Ascending aorta (tissue), 2 donors: ENCODE measurements at regions of chr3 and their contacts with region 1.

Region 1: DNA sequence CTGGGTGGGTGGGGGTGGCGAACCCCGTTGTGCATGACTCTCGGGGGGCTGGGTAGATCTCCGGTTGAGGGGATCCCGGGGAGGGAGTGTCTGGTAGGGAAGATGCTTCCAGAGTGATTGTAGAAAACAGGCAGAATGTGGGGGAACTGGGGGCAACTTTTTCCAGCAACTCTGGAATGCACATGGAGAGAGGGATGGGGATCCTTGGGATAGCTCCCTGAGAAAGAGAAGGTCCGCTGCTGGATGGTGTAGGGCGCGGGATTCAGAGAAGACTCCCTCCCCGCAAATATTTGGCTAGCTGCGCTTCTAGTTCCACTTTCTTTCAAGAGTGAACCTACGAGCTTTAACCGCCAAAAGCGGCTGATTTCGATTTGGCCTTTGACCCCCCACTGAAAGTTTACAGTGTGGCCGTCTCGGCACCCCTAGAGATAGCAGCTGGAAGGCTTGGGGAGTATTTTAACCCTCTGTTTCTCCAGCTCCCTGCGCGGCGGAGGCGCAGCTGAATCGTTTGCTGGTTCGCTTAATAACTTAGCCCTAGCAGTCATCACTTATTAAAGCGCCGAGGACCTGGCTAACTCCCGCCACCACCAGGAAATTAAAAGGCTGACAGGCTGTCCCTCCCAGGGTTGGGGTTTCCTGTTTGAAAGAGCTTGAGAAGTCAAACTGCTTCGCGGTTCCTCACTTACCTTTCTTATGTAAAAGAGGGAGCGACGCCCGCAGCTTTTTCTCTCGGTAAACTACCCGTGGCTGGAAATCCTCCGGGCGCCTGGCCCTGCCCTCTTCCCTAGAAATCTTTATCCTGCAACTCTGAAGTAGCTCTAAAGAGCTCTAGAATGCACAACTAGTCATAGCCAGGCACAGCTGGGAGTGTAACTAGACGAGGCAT is 1.2 kb downstream of the PHLDB2 start:
- DNase-seq: peak; percentile 45 to 92
- H3K4me3 ChIP-seq: peak overlapping the region; percentile 89 to 93
- H3K27ac ChIP-seq: peak overlapping the region; percentile 97
- H3K4me1 ChIP-seq: peaks cover 3 to 20% of the 10 kb centered on the region in 2 donors
- H3K27me3 ChIP-seq: no peaks in the 10 kb centered on the region
- CTCF ChIP-seq: peak; percentile 49 to 73 (median 66)

Region 2: GRCh38 chr3:111351334-111351733 is 508.9 kb before region 1 on chr3:
- intact Hi-C with region 1: no loop called
- DNase-seq: no peak
- H3K4me3 ChIP-seq: no peak overlapping the region
- H3K27ac ChIP-seq: no peak overlapping the region
- H3K4me1 ChIP-seq: no peaks in the 10 kb centered on the region
- H3K27me3 ChIP-seq: no peaks in the 10 kb centered on the region
- CTCF ChIP-seq: no peak

Region 3: DNA sequence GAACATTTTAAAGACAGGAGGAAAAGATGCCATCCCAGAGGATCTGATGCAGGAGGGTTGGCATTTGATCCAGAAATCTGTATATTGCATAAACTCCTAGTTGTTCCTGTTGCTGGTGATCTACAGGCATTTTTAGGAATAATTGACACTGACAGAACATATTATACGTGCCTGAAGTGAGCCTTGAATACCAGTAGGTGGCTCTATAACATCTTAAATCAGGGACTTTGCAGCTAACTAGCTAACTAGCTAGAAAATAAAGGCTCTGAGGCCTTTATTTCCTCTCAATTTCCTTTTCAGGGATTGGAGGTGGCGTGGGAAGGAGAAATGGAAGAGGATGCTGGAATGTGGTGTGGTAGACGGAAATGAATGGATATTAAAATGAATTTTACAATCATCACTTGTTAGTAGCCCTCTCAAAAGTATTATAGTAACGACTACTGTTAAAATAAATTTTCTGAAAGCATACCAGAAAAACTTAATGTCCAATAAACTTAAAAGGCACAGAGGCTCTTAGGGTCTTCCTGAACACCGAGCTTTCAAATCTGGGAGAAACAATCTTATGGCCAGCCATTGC is 191.2 kb before region 1 on chr3:
- intact Hi-C with region 1: loop called (anchors 2 kb)
- DNase-seq: no peak
- H3K4me3 ChIP-seq: no peak overlapping the region
- H3K27ac ChIP-seq: peak overlapping the region in 1 of 2 donors; percentile 5
- H3K4me1 ChIP-seq: no peaks in the 10 kb centered on the region
- H3K27me3 ChIP-seq: no peaks in the 10 kb centered on the region
- CTCF ChIP-seq: peak; percentile 68 to 84 (median 71)

Region 4: DNA sequence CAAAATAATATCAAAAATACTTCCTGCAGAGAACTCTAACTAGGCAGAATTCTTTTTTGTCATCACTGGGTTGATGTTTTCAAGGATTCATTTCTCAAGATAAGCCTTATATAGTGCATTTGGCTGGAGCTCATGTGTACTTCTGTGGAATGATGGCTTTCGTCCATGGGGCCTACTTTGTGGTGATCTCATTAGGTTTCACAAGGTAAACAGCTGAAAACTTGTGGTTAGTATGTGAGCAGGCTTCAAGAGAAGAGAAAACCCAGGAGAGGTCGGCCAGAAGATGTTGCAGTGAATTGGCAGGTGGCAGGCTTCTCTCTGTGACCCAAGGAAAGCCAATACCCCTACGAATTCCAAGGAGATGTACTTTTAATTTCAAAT is 122.5 kb before region 1 on chr3:
- intact Hi-C with region 1: loop called (anchors 5 kb)
- DNase-seq: peak in 1 of 2 donors; percentile 88
- H3K4me3 ChIP-seq: no peak overlapping the region
- H3K27ac ChIP-seq: peak overlapping the region; percentile 65 to 66
- H3K4me1 ChIP-seq: peaks cover 8 to 23% of the 10 kb centered on the region in 2 donors
- H3K27me3 ChIP-seq: no peaks in the 10 kb centered on the region
- CTCF ChIP-seq: no peak

Region 5: GRCh38 chr3:111803123-111803593 is 57.1 kb before region 1 on chr3:
- intact Hi-C with region 1: loop called (anchors 1 kb)
- DNase-seq: peak; percentile 12 to 93
- H3K4me3 ChIP-seq: no peak overlapping the region
- H3K27ac ChIP-seq: peak overlapping the region; percentile 72 to 83
- H3K4me1 ChIP-seq: peaks cover 0 to 24% of the 10 kb centered on the region in 2 donors
- H3K27me3 ChIP-seq: no peaks in the 10 kb centered on the region
- CTCF ChIP-seq: no peak

Region 6: DNA sequence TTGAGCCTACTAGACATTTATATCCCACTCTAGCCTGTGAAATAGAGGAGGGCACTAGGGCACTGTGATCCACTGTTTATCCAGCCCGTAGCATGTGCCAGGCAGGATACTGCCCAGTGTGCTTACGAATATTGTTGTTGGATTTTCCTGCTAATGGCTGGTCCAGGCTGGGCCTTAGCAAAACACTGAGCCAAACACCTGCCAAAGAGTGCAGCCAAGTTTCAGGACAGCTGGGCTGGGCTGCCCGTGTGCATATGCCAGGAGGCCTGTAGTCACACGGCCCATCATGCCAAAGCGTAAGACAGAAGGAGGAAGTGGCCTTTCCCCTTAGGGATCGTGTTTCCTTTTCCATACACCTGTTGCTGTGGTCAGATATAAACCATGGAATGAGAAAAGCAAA is 64.1 kb after region 1 on chr3:
- intact Hi-C with region 1: loop called (anchors 5 kb)
- DNase-seq: peak; percentile 42 to 90
- H3K4me3 ChIP-seq: no peak overlapping the region
- H3K27ac ChIP-seq: peak overlapping the region; percentile 62 to 68
- H3K4me1 ChIP-seq: peaks cover 0 to 26% of the 10 kb centered on the region in 2 donors
- H3K27me3 ChIP-seq: no peaks in the 10 kb centered on the region
- CTCF ChIP-seq: no peak

Region 7: GRCh38 chr3:112086076-112086854 is 226.0 kb after region 1 on chr3 and contains the start of gene C3orf52:
- intact Hi-C with region 1: loop called (anchors 10 kb)
- DNase-seq: peak; percentile 49 to 89
- H3K4me3 ChIP-seq: peak within 1 kb of the TSS; percentile 74 to 88
- H3K27ac ChIP-seq: peak within 1 kb of the TSS; percentile 60 to 74
- H3K4me1 ChIP-seq: peaks cover 0 to 15% of the 10 kb centered on the region in 2 donors
- H3K27me3 ChIP-seq: no peaks in the 10 kb centered on the region
- CTCF ChIP-seq: no peak
- total RNA-seq, gene C3orf52: 0.32 TPM